H1 (cell line): ENCODE measurements at regions of chr14 and their contacts with region 1.

Region 1: DNA sequence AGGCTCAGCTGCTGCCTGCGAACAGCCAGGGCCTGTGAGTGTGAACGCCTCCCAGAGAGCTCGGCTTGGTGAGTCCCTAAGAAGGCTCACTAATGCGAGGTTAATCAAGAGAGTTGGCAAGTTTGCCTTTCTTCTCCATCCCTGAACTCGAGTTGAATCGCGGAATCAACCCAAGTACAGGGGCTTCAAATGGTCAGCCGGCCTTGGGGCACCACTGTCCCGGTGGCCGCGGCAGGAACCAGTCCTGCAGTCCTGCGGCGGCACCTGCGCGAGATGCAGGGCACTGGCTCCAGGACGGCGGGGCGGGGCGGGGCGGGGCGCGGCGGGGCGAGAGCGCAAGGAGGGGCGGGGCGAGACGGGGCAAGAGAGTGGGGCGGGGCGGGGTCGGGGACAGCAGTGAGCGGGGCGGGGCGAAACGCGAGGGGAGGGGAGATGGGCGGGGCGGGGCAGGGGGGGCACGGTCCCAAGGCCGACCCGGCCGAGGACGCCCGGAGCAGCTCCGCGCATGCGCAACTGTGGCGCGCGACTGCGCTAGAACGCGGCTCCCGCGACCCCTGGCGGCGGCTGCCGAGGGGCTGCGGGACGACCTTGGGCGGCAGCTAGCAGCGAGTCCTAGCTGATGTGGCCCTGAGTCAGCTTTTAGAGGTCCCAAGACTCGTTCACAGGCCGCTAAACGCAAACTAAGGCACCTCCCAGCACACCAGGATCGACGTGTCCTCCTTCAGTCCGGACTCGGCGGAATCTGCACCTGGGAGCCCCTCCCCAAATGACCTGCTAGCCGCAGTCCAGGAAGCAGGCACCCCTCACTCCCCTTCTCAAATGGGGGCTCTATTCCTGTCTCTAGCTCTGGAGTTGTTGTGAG is 58.0 kb downstream of the TTC7B start:
- DNase-seq: peak; percentile 89 to 97
- H3K4me3 ChIP-seq: peak overlapping the region; percentile 16 to 53 (median 30); a peak in 5 of 8 replicates
- H3K27ac ChIP-seq: peak overlapping the region; percentile 79; the same call in 1 of the 2 replicates
- H3K4me1 ChIP-seq: peaks cover 0 to 11% (median 4%) of the 10 kb centered on the region in 4 experiments; a peak in 6 of 7 replicates
- H3K27me3 ChIP-seq: peaks cover 0 to 4% (median 1%) of the 10 kb centered on the region in 4 experiments; a peak in 3 of 7 replicates
- CTCF ChIP-seq: peak; percentile 93 to 94 (median 94)
- EP300 ChIP-seq: no peak
- POLR2A ChIP-seq: no peak
- RAD21 ChIP-seq: peak; percentile 72 to 78

Region 2: DNA sequence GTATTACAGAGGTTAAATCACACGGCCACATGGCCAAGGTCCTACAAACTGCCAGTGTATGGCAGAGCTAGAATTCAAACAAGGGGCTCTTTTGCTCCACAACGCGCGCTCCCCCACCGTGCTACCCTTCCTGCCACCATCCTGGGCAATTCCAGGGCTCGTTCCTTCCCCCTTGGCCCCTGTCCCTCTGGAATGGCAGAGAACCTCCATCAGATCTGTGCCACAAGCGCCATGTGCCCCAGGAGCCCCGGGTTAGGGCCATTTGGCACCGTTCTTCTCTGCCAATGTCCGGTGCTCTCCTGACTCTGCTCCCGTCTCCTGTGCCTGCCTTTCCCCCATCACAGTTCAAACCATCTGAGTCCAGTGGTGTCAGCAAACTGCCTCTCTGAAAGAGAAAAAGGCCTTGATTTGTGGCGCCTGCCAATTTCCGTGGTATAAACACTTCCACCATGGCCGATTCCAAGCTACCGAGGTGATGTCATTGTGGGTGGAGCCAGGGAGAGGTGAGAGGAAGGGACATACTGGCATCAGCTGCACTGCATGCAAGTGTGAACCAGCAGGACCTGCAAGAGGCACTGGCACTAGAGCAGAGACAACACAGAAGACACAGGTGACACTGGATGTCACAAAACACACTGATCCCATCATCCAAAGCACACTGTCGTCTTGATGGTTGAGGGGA is 198.3 kb before region 1 on chr14:
- CTCF ChIA-PET with region 1: interaction called, 12 read pairs
- POLR2A ChIA-PET with region 1: no interaction called
- DNase-seq: no peak
- H3K4me3 ChIP-seq: no peak overlapping the region
- H3K27ac ChIP-seq: no peak overlapping the region
- H3K4me1 ChIP-seq: peaks cover 0 to 17% (median 14%) of the 10 kb centered on the region in 4 experiments; a peak in 6 of 7 replicates
- H3K27me3 ChIP-seq: no peaks in the 10 kb centered on the region; a peak in 1 of 7 replicates
- CTCF ChIP-seq: no peak
- EP300 ChIP-seq: no peak
- POLR2A ChIP-seq: no peak
- RAD21 ChIP-seq: no peak

Region 3: GRCh38 chr14:90726656-90727055 is 31.6 kb before region 1 on chr14:
- CTCF ChIA-PET with region 1: interaction called, 13 read pairs
- POLR2A ChIA-PET with region 1: no interaction called
- DNase-seq: no peak
- H3K4me3 ChIP-seq: no peak overlapping the region
- H3K27ac ChIP-seq: no peak overlapping the region
- H3K4me1 ChIP-seq: peaks cover 0 to 3% (median 2%) of the 10 kb centered on the region in 4 experiments; a peak in 2 of 7 replicates
- H3K27me3 ChIP-seq: no peaks in the 10 kb centered on the region
- CTCF ChIP-seq: peak in 1 of 3 experiments; percentile 19; a peak in 1 of 4 replicates
- EP300 ChIP-seq: no peak
- POLR2A ChIP-seq: no peak
- RAD21 ChIP-seq: peak; percentile 44 to 60

Region 4: GRCh38 chr14:90785471-90785870 is 27.2 kb after region 1 on chr14:
- CTCF ChIA-PET with region 1: interaction called, 59 read pairs
- POLR2A ChIA-PET with region 1: no interaction called
- DNase-seq: no peak
- H3K4me3 ChIP-seq: no peak overlapping the region
- H3K27ac ChIP-seq: no peak overlapping the region
- H3K4me1 ChIP-seq: no peaks in the 10 kb centered on the region; a peak in 1 of 7 replicates
- H3K27me3 ChIP-seq: no peaks in the 10 kb centered on the region; a peak in 1 of 7 replicates
- CTCF ChIP-seq: peak; percentile 55 to 76 (median 64)
- EP300 ChIP-seq: no peak
- POLR2A ChIP-seq: no peak
- RAD21 ChIP-seq: peak; percentile 23 to 49; a peak in 3 of 4 replicates

Region 5: GRCh38 chr14:90815822-90816700 is 57.8 kb after region 1 on chr14 and contains the start of gene TTC7B:
- CTCF ChIA-PET with region 1: interaction called, 12 read pairs
- POLR2A ChIA-PET with region 1: no interaction called
- DNase-seq: peak in 1 of 2 experiments; percentile 77
- H3K4me3 ChIP-seq: peak within 1 kb of the TSS; percentile 53 to 83 (median 64)
- H3K27ac ChIP-seq: no peak within 1 kb of the TSS
- H3K4me1 ChIP-seq: peaks cover 0 to 10% (median 5%) of the 10 kb centered on the region in 4 experiments; a peak in 6 of 7 replicates
- H3K27me3 ChIP-seq: peaks cover 0 to 5% (median 5%) of the 10 kb centered on the region in 4 experiments; a peak in 4 of 7 replicates
- CTCF ChIP-seq: peak in 2 of 3 experiments; percentile 45 to 56; a peak in 3 of 4 replicates
- EP300 ChIP-seq: no peak
- POLR2A ChIP-seq: no peak
- RAD21 ChIP-seq: peak in 1 of 2 experiments; percentile 22; a peak in 1 of 4 replicates
- total RNA-seq, gene TTC7B: 31.2 and 34.0 TPM in 2 replicates

Region 6: GRCh38 chr14:90924621-90925345 is 166.5 kb after region 1 on chr14:
- CTCF ChIA-PET with region 1: no interaction called
- POLR2A ChIA-PET with region 1: no interaction called
- DNase-seq: no peak
- H3K4me3 ChIP-seq: no peak overlapping the region
- H3K27ac ChIP-seq: no peak overlapping the region
- H3K4me1 ChIP-seq: no peaks in the 10 kb centered on the region
- H3K27me3 ChIP-seq: no peaks in the 10 kb centered on the region
- CTCF ChIP-seq: no peak
- EP300 ChIP-seq: no peak
- POLR2A ChIP-seq: no peak
- RAD21 ChIP-seq: no peak